A673 (cell line): ENCODE measurements at regions of chr16 and their contacts with region 1.

Region 1: GRCh38 chr16:61289141-61289540 is 747.1 kb downstream of the CDH8 start:
- DNase-seq: peak; percentile 90
- H3K4me3 ChIP-seq: no peak overlapping the region
- H3K27ac ChIP-seq: peak overlapping the region; percentile 75
- H3K4me1 ChIP-seq: peaks cover 42% of the 10 kb centered on the region
- H3K27me3 ChIP-seq: no peaks in the 10 kb centered on the region
- CTCF ChIP-seq: no peak

Region 2: GRCh38 chr16:61233713-61234112 is 55.4 kb before region 1 on chr16:
- CTCF ChIA-PET with region 1: no interaction called
- POLR2A ChIA-PET with region 1: no interaction called
- intact Hi-C with region 1: loop called (anchors 5 kb)
- DNase-seq: peak; percentile 92
- H3K4me3 ChIP-seq: peak overlapping the region; percentile 31
- H3K27ac ChIP-seq: peak overlapping the region; percentile 90
- H3K4me1 ChIP-seq: peaks cover 65% of the 10 kb centered on the region
- H3K27me3 ChIP-seq: no peaks in the 10 kb centered on the region
- CTCF ChIP-seq: no peak